Upper lobe of right lung (tissue), 1 donor: ENCODE measurements at regions of chr9 and their contacts with region 1.

Region 1: GRCh38 chr9:113657703-113658544 is 194.4 kb downstream of the RGS3 start:
- DNase-seq: peak; percentile 85
- ATAC-seq: peak; percentile 93
- H3K4me3 ChIP-seq: no peak overlapping the region
- H3K27ac ChIP-seq: no peak overlapping the region
- H3K4me1 ChIP-seq: peaks cover 23% of the 10 kb centered on the region
- H3K27me3 ChIP-seq: peaks cover 5% of the 10 kb centered on the region
- CTCF ChIP-seq: peak; percentile 94

Region 2: GRCh38 chr9:113446323-113446740 is 211.6 kb before region 1 on chr9:
- intact Hi-C with region 1: loop called (anchors 5 kb)
- DNase-seq: no peak
- ATAC-seq: peak; percentile 67
- H3K4me3 ChIP-seq: no peak overlapping the region
- H3K27ac ChIP-seq: no peak overlapping the region
- H3K4me1 ChIP-seq: no peaks in the 10 kb centered on the region
- H3K27me3 ChIP-seq: no peaks in the 10 kb centered on the region
- CTCF ChIP-seq: peak; percentile 78

Region 3: GRCh38 chr9:113844466-113844865 is 186.5 kb after region 1 on chr9:
- intact Hi-C with region 1: no loop called
- DNase-seq: no peak
- ATAC-seq: no peak
- H3K4me3 ChIP-seq: no peak overlapping the region
- H3K27ac ChIP-seq: no peak overlapping the region
- H3K4me1 ChIP-seq: no peaks in the 10 kb centered on the region
- H3K27me3 ChIP-seq: no peaks in the 10 kb centered on the region
- CTCF ChIP-seq: no peak